Brain microvascular endothelial cell (primary cell): ENCODE measurements at regions of chr17 and their contacts with region 1.

Region 1: GRCh38 chr17:49031965-49032928 is 35.1 kb downstream of the IGF2BP1 start:
- DNase-seq: peak; percentile 69
- H3K4me3 ChIP-seq: no peak overlapping the region
- H3K27ac ChIP-seq: no peak overlapping the region
- H3K27me3 ChIP-seq: no peaks in the 10 kb centered on the region
- CTCF ChIP-seq: peak; percentile 86

Region 2: DNA sequence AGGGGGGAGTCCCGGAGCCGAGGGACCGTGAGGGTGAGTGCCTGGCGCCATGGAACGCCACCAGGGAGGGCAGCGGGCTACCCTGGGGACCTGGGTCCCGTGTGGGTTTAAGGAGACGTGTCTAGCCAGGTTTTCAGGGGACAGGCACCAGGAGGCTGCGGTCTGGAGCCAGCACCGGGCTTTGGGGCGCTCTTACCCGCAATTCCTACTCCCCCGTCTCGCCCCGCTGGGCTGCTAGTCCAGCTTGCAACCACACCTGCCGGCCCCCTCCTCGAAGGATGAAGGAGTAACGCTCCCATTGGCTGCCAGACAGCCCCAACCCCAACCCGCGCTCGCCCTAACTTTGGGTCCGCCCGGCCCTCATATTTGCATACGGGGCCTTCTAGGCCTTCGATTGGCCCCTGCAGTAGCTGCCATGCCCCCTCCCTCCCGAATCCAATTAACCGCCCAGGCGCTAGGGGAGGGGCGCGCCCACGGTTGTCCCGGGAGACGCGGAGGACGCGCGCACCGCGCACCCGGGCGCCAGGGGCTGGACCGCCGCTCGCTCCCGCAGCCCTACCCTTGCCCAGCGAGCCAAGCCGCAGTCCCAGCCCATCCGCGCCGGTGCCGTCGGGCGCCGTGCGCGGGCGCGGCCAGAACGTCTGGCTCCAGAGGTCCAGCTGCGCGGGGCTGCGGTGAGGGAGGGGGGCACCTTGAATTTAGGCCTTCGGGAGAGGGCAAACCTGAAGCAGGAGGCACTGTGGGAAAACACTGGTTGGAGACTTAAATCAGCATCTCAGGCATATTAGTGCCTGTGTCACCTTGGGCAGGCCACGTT is 215.3 kb before region 1 on chr17 and contains the start of gene TTLL6:
- in situ Hi-C with region 1: loop called (anchors 25 kb)
- DNase-seq: peak; percentile 53
- H3K4me3 ChIP-seq: peak within 1 kb of the TSS; percentile 47
- H3K27ac ChIP-seq: no peak within 1 kb of the TSS
- H3K27me3 ChIP-seq: peaks cover 3% of the 10 kb centered on the region
- CTCF ChIP-seq: no peak

Region 3: DNA sequence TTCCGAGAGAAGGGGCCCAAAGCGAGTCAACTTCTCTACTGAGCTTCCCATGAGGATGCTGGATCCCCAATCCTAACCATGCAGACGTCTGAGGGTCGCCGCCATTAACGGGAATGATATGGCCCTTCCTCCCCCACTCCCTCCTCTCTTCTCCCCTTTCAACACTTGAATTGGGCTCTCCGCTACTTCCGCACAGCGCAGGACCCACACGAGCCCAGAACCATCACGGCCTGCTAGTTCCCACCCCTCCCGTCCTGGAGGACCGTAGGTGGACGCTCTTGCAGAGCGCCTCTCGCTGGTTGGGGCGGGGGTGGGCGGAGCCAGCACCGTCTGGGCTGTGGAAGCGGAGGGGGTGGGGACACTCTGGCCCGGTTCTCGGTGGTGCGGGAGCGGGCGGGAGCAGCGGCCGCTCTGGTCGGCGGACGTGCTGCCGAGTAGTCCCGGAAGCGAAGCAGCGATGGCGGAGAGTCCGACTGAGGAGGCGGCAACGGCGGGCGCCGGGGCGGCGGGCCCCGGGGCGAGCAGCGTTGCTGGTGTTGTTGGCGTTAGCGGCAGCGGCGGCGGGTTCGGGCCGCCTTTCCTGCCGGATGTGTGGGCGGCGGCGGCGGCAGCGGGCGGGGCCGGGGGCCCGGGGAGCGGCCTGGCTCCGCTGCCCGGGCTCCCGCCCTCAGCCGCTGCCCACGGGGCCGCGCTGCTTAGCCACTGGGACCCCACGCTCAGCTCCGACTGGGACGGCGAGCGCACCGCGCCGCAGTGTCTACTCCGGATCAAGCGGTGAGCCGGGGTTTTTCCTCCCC is 124.0 kb before region 1 on chr17 and contains the start of gene UBE2Z:
- in situ Hi-C with region 1: loop called (anchors 25 kb)
- DNase-seq: peak; percentile 88
- H3K4me3 ChIP-seq: peak within 1 kb of the TSS; percentile 75
- H3K27ac ChIP-seq: peak within 1 kb of the TSS; percentile 93
- H3K27me3 ChIP-seq: no peaks in the 10 kb centered on the region
- CTCF ChIP-seq: peak; percentile 25

Region 4: DNA sequence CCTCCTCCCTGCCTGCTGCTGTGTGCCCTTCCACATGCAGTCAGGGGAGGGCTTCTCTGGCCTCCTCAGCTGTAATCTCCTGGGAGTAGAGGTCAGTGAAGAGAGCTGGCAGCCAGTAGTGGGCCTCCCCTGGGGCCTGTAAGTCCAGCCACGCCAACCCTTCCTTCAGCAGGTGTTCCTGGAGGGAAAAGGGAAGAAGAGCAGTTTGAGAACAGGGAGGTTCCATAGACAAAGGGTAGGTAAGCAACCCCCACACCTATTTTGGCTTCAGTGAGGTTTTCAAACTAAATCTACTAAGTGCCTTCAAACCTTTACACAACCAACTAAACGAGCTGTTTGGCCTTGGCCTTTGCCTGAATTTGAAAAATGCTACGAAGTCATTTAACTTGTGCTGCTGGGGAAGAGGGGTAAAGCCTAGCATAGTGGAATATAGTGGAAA is 101.8 kb before region 1 on chr17:
- in situ Hi-C with region 1: no loop called
- DNase-seq: no peak
- H3K4me3 ChIP-seq: no peak overlapping the region
- H3K27ac ChIP-seq: no peak overlapping the region
- H3K27me3 ChIP-seq: no peaks in the 10 kb centered on the region
- CTCF ChIP-seq: no peak

Region 5: DNA sequence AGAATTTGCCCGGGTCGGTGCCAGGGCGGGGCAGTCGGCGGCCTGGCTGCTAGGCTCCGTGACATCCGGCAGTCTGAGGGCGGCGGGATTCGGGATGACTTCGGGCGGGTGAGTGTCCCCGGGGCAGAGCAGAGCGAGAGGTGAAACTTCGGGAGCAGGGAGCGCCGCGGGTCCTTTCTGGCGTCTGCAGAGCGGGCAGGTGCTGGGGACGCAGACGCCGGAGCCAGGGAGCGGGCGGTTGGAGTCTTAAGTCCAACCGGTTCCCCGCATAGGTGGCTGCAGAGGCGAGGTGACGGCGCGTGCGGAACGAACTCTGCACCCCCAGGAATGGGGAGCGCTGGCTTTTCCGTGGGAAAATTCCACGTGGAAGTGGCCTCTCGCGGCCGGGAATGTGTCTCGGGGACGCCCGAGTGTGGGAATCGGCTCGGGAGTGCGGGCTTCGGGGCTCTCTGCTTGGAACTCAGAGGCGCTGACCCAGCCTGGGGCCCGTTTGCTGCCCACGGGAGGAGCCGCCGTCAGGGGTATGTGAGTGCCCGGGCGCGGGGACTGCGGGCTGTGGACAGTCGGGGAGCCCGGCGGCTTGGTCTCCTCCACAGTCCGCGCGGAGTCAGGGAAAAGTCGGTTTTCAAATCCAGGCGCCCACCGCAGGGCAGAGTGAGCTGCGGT is 100.6 kb after region 1 on chr17 and contains the start of gene B4GALNT2:
- in situ Hi-C with region 1: no loop called
- DNase-seq: no peak
- H3K4me3 ChIP-seq: peak within 1 kb of the TSS; percentile 50
- H3K27ac ChIP-seq: no peak within 1 kb of the TSS
- H3K27me3 ChIP-seq: no peaks in the 10 kb centered on the region
- CTCF ChIP-seq: no peak

Region 6: DNA sequence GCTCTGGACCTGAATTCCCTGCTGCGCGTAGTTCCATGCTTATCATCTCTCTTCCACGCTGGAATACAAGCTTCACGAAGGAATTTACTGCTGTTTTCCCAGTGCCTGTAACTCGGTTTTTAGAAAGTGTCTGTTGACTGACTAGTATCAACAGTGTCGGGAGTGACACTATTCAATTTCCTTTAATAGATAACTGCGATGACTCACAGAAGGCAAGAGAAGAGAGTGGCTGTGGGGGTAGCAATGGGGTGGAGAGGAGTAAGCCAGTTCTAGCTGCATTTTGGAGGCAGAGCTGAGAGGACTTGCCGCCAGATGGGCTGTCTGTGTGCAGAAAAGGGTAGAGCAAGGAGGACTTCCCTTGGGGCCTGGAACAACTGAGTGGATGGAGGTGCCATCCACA is 125.5 kb after region 1 on chr17:
- in situ Hi-C with region 1: no loop called
- DNase-seq: peak; percentile 40
- H3K4me3 ChIP-seq: no peak overlapping the region
- H3K27ac ChIP-seq: no peak overlapping the region
- H3K27me3 ChIP-seq: no peaks in the 10 kb centered on the region
- CTCF ChIP-seq: no peak